ENCODE measurements at regions of chr15 and their contacts with region 1.

Region 1: DNA sequence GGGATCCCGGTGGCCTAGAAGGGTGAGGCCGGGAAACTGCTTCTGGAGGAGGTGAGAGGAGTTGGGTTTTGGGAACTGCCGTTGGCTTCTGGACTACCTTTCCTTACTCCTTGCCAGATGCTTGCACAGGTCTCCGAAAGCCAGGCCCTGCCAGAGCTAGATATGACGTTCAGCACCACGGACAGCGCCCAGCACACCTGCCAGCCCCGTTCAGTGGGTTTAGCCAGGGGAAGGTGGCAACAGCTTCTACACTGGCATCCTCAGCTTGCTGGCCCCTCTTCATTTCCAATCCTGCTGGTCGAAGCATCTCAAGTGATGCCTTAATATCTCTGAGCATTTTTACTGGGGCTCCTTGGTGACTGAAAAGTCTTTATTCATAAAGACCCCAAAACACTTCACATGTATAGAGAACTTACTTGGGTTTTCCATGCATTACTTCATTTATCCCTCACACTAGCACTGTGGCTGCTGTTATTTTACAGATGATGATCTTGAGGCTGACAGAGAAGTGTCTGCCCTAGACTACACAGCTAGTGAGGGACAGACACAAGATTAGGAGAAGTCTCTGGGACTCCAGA is 21.9 kb downstream of the HCN4 start:
- DNase-seq: peak; percentile 16 to 75 (median 61)
- ATAC-seq: no peak
- H3K4me3 ChIP-seq: no peak overlapping the region
- H3K4me3 Mint-ChIP-seq: no peak overlapping the region
- H3K27ac ChIP-seq: no peak overlapping the region
- H3K27ac Mint-ChIP-seq: no peak overlapping the region
- H3K4me1 ChIP-seq: no peaks in the 10 kb centered on the region
- H3K4me1 Mint-ChIP-seq: no peaks in the 10 kb centered on the region
- H3K27me3 ChIP-seq: no peaks in the 10 kb centered on the region
- H3K27me3 Mint-ChIP-seq: no peaks in the 10 kb centered on the region
- CTCF ChIP-seq: no peak

Region 2: DNA sequence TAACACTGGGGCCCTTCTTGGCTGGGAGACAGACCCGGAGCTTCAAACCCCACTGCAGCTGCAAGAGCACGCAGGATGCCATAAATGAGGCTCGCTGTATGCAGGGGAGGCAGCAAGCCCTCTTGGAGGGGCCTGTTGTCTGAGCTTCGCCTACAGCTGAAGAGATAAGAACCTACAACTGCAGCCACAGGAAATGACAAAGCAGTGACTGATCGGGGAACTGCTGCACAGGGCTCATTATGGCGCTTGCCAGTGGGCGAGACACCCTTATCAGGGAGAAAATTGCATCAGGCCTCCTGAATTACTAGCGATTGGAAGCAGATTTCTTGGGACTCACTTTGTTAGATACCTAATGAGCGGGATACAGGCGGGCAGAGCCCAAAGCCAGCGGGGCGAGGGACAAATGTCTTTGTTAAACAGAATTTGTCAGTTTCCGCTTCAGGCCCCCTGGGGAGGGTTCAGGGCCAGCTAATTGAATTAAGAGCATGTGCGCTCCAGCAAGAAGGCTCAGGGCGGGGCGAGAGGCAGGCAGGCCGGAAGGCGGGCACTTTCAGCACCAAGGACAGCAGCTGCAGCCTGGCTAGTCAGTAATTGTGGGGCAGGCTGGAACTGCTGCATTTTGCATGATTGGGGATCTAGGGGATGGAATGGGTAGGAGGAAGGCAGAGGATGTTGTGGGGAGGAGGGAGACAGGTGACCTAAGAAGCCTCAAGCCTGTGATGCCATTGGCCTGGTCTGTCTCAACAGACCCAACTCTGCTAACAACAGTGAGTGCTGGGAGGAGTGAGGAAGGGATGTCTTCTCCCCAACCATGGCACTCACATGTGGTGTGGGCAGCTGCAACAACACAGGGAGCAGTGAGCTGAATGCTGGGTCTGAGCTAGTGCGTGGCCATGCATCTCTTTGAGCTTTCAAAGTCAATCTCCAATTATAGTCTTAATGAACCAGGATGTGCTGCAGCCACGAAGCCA is 944.6 kb after region 1 on chr15:
- CTCF ChIA-PET with region 1: no interaction called
- POLR2A ChIA-PET with region 1: no interaction called
- intact Hi-C with region 1: loop called in 1 of 2 experiments (anchors 5 kb)
- DNase-seq: peak; percentile 45 to 78 (median 69)
- ATAC-seq: peak; percentile 59
- H3K4me3 ChIP-seq: no peak overlapping the region
- H3K4me3 Mint-ChIP-seq: no peak overlapping the region
- H3K27ac ChIP-seq: no peak overlapping the region
- H3K27ac Mint-ChIP-seq: no peak overlapping the region
- H3K4me1 ChIP-seq: no peaks in the 10 kb centered on the region
- H3K4me1 Mint-ChIP-seq: no peaks in the 10 kb centered on the region
- H3K27me3 ChIP-seq: peaks cover 0 to 2% of the 10 kb centered on the region in 2 experiments
- H3K27me3 Mint-ChIP-seq: peaks cover 38% of the 10 kb centered on the region
- CTCF ChIP-seq: no peak